Motor neuron (in vitro differentiated cells): ENCODE measurements at regions of chr5 and their contacts with region 1.

Region 1: DNA sequence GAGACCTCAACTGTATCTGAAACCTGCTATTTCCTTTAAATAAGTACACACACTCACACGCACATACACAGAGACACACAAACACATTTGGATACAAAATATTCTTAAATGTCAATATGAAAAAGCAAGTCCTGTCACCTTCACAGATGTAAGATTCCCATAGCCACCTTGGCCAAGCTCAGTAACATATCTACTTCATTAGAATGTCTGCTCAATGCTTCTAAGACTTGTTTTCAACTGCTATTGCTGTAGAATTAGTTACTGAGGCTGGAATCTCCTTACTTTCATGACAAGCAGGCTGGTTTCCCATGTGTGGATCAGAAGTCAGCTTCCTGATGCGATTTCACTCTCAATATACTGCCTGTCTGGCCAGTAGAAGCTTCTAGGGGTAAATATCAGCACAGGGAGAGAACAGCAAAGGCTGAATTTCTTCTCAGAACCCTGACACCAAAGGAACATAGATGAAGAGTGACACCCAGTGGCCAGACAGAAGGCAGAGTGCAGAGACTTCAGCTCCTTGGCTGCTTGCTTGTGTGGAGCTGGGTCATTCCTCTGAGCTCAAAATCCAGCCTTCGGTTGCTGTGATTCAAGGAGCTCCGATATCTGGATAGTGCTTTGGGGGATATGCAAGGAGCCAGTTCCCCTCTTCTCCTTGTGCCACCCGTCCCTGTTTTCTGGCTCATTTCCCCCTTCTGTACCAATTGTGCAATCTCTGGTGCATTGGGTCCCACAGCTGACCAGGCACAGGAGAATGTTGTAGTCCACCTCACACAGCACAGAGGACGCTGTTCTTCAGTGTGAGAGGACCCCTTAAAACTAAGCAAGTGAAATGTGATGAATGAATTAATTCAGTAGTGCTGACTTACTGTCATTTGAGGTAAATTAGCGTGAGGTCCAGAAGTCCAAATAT is 26.6 kb upstream of the ABLIM3 start:
- ATAC-seq: peak; percentile 83 to 100 (median 96)
- H3K4me3 ChIP-seq: no peak overlapping the region
- H3K27ac ChIP-seq: no peak overlapping the region
- H3K4me1 ChIP-seq: no peaks in the 10 kb centered on the region

Region 2: GRCh38 chr5:148443998-148444397 is 670.7 kb before region 1 on chr5:
- in situ Hi-C with region 1: loop called in 1 of 9 experiments (anchors 25 kb)
- ATAC-seq: peak; percentile 55 to 84 (median 74)
- H3K4me3 ChIP-seq: no peak overlapping the region
- H3K27ac ChIP-seq: no peak overlapping the region
- H3K4me1 ChIP-seq: no peaks in the 10 kb centered on the region

Region 3: DNA sequence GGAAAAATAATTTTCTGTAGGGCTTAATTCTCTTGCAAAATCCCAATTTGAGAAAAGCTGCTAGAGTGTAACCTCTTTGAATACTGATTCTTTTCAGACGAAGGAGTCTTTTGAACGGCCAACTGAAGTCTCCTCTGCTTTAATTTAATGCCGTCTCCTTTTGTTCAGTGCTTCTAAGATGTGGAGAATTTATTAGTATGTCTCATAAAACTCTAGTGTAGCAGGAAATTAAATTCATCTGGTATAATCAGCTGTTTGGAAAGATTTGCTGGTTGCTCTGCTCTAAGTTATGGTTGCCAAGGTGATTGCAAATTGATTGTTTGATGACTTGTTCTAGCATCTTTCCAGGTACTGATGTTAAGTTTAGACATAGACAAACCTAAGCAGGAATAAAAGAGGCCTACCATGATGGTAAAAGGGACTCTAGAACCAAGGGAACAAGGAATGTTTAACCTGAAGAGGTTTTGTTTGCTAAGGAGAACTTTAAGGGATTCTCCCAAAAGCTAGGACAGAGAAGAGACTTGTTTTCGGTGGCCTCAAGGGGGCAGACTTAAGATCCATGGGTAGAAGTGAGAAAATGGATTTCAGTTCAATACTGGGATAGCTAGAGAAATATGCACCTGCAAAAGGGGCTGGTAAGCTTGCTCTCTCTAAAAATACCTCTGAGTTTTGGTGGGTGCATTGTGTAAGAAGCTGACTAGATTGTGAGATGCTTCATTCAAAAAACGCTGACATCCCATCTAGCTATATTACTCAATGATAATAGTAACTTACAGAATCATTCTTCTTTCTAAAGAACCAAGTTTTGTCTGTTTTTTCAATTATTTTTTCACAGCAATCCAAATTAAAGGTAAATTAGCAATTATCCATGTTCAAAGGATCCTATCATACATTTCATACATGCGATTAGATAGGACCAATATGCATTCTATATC is 293.9 kb before region 1 on chr5:
- in situ Hi-C with region 1: loop called in 1 of 9 experiments (anchors 25 kb)
- ATAC-seq: peak in 2 of 8 experiments; percentile 13 to 55
- H3K4me3 ChIP-seq: no peak overlapping the region
- H3K27ac ChIP-seq: no peak overlapping the region
- H3K4me1 ChIP-seq: no peaks in the 10 kb centered on the region

Region 4: GRCh38 chr5:149018909-149019443 is 95.7 kb before region 1 on chr5:
- in situ Hi-C with region 1: no loop called
- ATAC-seq: peak in 2 of 8 experiments; percentile 54 to 64
- H3K4me3 ChIP-seq: no peak overlapping the region
- H3K27ac ChIP-seq: no peak overlapping the region
- H3K4me1 ChIP-seq: no peaks in the 10 kb centered on the region

Region 5: GRCh38 chr5:149053072-149053695 is 61.5 kb before region 1 on chr5:
- in situ Hi-C with region 1: loop called in 1 of 9 experiments (anchors 10 kb)
- ATAC-seq: peak in 4 of 8 experiments; percentile 62 to 94 (median 86)
- H3K4me3 ChIP-seq: no peak overlapping the region
- H3K27ac ChIP-seq: no peak overlapping the region
- H3K4me1 ChIP-seq: no peaks in the 10 kb centered on the region